GM10248 (cell line): ENCODE measurements at regions of chr3 and their contacts with region 1.

Region 1: GRCh38 chr3:100333970-100334487 is 528 bp upstream of the NIT2 start:
- DNase-seq: no peak
- CTCF ChIP-seq: no peak

Region 2: DNA sequence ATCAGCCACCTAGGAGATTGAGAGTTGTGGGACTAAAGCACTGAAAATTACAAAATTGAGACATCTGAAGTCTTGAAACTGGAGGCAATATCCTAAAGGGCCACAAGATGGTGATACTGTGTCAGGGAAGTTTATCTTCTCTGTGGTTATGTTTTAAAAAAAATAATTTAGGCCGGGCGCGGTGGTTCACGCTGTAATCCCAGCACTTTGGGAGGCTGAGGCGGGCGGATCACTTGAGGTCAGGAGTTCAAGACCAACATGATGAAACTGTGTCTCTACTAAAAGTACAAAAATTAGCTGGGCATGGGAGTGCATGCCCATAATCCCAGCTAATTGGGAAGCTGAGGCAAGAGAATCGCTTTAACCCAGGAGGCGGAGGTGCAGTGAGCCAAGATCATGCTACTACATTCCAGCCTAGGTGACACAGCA is 17.4 kb before region 1 on chr3:
- CTCF ChIA-PET with region 1: interaction called, 20 read pairs
- POLR2A ChIA-PET with region 1: no interaction called
- DNase-seq: peak; percentile 46
- CTCF ChIP-seq: peak; percentile 66

Region 3: GRCh38 chr3:100717063-100717462 is 383.0 kb after region 1 on chr3:
- CTCF ChIA-PET with region 1: no interaction called
- POLR2A ChIA-PET with region 1: no interaction called
- DNase-seq: no peak
- CTCF ChIP-seq: no peak